ENCODE measurements at regions of chr9 and their contacts with region 1.

Region 1: GRCh38 chr9:76403352-76403751 is 9.1 kb upstream of the RFK start:
- DNase-seq: peak; percentile 69
- H3K4me3 ChIP-seq: peak overlapping the region in 2 of 3 experiments; percentile 1 to 17
- H3K27ac ChIP-seq: peak overlapping the region; percentile 1
- H3K4me1 ChIP-seq: peaks cover 3% of the 10 kb centered on the region
- H3K27me3 ChIP-seq: no peaks in the 10 kb centered on the region
- CTCF ChIP-seq: peak; percentile 51 to 60

Region 2: GRCh38 chr9:76419782-76420380 is 16.5 kb after region 1 on chr9:
- CTCF ChIA-PET with region 1: no interaction called
- dilution Hi-C with region 1: no loop called
- in situ Hi-C with region 1: no loop called
- intact Hi-C with region 1: loop called (anchors 1 kb)
- DNase-seq: no peak
- H3K4me3 ChIP-seq: no peak overlapping the region
- H3K27ac ChIP-seq: no peak overlapping the region
- H3K4me1 ChIP-seq: no peaks in the 10 kb centered on the region
- H3K27me3 ChIP-seq: no peaks in the 10 kb centered on the region
- CTCF ChIP-seq: peak; percentile 69 to 78

Region 3: GRCh38 chr9:76441551-76442322 is 38.4 kb after region 1 on chr9:
- CTCF ChIA-PET with region 1: no interaction called
- dilution Hi-C with region 1: no loop called
- in situ Hi-C with region 1: no loop called
- intact Hi-C with region 1: loop called (anchors 2 kb)
- DNase-seq: peak; percentile 40
- H3K4me3 ChIP-seq: no peak overlapping the region
- H3K27ac ChIP-seq: no peak overlapping the region
- H3K4me1 ChIP-seq: no peaks in the 10 kb centered on the region
- H3K27me3 ChIP-seq: no peaks in the 10 kb centered on the region
- CTCF ChIP-seq: no peak

Measured in mammary epithelial cell (primary cell).